ENCODE measurements at regions of chr3 and their contacts with region 1.

Region 1: GRCh38 chr3:60742606-60743145 is 508.6 kb downstream of the FHIT start:
- DNase-seq: peak; percentile 65
- H3K4me3 Mint-ChIP-seq: no peak overlapping the region
- H3K27ac Mint-ChIP-seq: no peak overlapping the region
- H3K4me1 Mint-ChIP-seq: peaks cover 6% of the 10 kb centered on the region
- H3K27me3 Mint-ChIP-seq: no peaks in the 10 kb centered on the region
- CTCF ChIP-seq: peak; percentile 26

Region 2: DNA sequence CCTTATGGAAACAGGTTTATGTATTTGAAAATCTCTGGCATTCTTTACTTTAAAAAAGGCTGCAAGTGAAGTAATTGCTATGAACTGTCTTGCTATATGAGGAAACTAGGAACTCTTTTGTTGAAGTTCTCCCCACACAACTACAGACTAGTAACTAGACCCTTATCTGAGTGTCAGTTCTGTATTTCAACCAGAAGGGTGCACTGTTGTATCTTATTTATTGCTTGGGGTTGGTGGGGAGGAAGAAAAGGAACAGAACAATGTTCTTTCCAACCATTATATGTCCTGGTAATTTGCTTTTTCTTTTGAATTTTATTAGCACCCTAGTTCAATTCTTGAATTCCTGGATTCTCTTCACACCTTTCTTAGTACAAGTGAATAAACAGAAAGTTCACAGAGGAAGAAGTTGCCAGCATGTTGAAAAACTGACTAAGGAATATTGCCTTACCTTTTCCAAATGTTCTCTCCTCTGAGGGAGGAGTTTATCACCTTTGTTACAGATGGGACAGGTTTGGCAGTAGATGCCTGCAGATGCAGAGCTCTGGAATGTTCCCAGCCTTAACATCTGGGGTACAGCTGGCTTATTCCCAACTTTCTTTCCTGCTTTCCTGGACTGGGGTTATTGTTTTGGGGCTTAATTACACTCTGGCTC is 1530.4 kb before region 1 on chr3:
- CTCF ChIA-PET with region 1: interaction called, 4 read pairs
- POLR2A ChIA-PET with region 1: no interaction called
- intact Hi-C with region 1: loop called (anchors 10 kb)
- DNase-seq: peak; percentile 50
- H3K4me3 Mint-ChIP-seq: no peak overlapping the region
- H3K27ac Mint-ChIP-seq: no peak overlapping the region
- H3K4me1 Mint-ChIP-seq: peaks cover 5% of the 10 kb centered on the region
- H3K27me3 Mint-ChIP-seq: no peaks in the 10 kb centered on the region
- CTCF ChIP-seq: peak; percentile 70

Region 3: DNA sequence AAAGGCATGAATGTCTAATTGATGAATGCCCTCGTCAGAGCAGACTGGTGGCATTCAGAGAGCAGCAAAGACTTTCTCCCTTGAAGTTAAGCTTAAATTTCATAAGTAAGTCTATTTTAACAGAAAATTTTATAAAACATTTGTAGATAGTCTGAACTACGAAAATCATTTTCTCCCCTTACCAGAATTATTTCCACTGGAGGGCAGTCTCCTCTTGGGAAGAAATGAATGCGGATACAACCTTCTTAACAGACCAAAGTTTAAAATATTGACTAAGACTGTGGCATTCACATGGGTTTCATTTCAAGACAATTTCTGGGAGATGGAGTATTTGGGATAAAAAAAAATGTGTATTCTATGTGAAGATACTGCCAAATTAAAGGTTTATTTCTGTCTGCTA is 160.4 kb before region 1 on chr3:
- CTCF ChIA-PET with region 1: no interaction called
- POLR2A ChIA-PET with region 1: no interaction called
- intact Hi-C with region 1: loop called (anchors 5 kb)
- DNase-seq: peak; percentile 35
- H3K4me3 Mint-ChIP-seq: no peak overlapping the region
- H3K27ac Mint-ChIP-seq: no peak overlapping the region
- H3K4me1 Mint-ChIP-seq: no peaks in the 10 kb centered on the region
- H3K27me3 Mint-ChIP-seq: no peaks in the 10 kb centered on the region
- CTCF ChIP-seq: peak; percentile 12

Region 4: GRCh38 chr3:60973316-60973715 is 230.6 kb after region 1 on chr3:
- CTCF ChIA-PET with region 1: no interaction called
- POLR2A ChIA-PET with region 1: no interaction called
- intact Hi-C with region 1: no loop called
- DNase-seq: no peak
- H3K4me3 Mint-ChIP-seq: no peak overlapping the region
- H3K27ac Mint-ChIP-seq: no peak overlapping the region
- H3K4me1 Mint-ChIP-seq: no peaks in the 10 kb centered on the region
- H3K27me3 Mint-ChIP-seq: no peaks in the 10 kb centered on the region
- CTCF ChIP-seq: no peak